GM23248 (cell line): ENCODE measurements at regions of chr2 and their contacts with region 1.

Region 1: GRCh38 chr2:235669983-235670962 is 176.4 kb downstream of the AGAP1 start:
- DNase-seq: peak; percentile 96
- H3K4me3 ChIP-seq: peak overlapping the region; percentile 77
- H3K27ac ChIP-seq: no peak overlapping the region
- H3K4me1 ChIP-seq: peaks cover 10% of the 10 kb centered on the region
- H3K27me3 ChIP-seq: no peaks in the 10 kb centered on the region

Region 2: GRCh38 chr2:235244255-235245220 is 425.7 kb before region 1 on chr2:
- in situ Hi-C with region 1: no loop called
- DNase-seq: peak; percentile 70
- H3K4me3 ChIP-seq: no peak overlapping the region; the same call in 1 of the 2 replicates
- H3K27ac ChIP-seq: peak overlapping the region; percentile 44
- H3K4me1 ChIP-seq: no peaks in the 10 kb centered on the region; the same call in 1 of the 2 replicates
- H3K27me3 ChIP-seq: no peaks in the 10 kb centered on the region

Region 3: DNA sequence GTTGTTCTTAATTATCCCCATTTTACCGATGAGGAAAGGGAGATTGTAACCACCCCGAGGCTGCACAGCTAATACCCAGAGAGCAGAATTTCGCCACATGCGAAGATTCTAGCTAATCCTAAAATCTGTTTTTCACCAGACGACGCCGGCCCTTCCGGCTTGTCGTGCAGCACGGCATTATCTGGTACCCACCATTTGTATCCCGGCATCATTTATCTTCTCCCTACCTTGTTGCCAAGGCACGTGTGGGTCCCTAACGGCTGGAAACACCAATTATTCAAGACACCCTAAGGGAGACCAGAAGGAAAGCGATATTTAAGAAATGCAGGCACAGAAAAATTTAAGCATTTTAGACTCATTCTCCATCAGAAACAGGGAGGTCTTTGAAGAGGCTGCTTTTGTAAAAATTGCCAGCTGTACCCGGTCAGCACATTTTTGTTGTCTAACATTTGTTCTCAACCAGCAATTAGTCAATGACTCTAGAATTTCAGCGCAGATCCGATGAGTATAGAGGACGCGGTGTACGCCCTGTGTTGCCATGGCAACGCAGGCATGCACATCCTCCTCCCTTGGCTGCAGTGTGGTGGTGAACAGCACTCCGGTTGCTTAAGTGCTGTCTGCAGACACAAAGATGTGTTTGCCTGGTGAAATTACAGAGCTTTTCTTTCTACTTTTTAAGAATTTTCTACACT is 64.8 kb before region 1 on chr2:
- in situ Hi-C with region 1: loop called (anchors 10 kb)
- DNase-seq: peak; percentile 100
- H3K4me3 ChIP-seq: peak overlapping the region; percentile 56
- H3K27ac ChIP-seq: peak overlapping the region; percentile 94
- H3K4me1 ChIP-seq: peaks cover 36% of the 10 kb centered on the region
- H3K27me3 ChIP-seq: no peaks in the 10 kb centered on the region